CD4-positive, alpha-beta T cell (primary cell): ENCODE measurements at regions of chr16 and their contacts with region 1.

Region 1: GRCh38 chr16:50326949-50327402 is 41.8 kb downstream of the BRD7 start:
- DNase-seq: peak; percentile 39 to 93 (median 62)
- ATAC-seq: peak; percentile 92
- H3K4me3 ChIP-seq: no peak overlapping the region
- H3K4me3 Mint-ChIP-seq: no peak overlapping the region
- H3K27ac ChIP-seq: peak overlapping the region in 1 of 2 donors; percentile 20
- H3K27ac Mint-ChIP-seq: peak overlapping the region; percentile 84
- H3K4me1 ChIP-seq: peaks cover 38% of the 10 kb centered on the region
- H3K4me1 Mint-ChIP-seq: peaks cover 64% of the 10 kb centered on the region
- H3K27me3 ChIP-seq: no peaks in the 10 kb centered on the region
- H3K27me3 Mint-ChIP-seq: no peaks in the 10 kb centered on the region
- CTCF ChIP-seq: peak; percentile 83

Region 2: DNA sequence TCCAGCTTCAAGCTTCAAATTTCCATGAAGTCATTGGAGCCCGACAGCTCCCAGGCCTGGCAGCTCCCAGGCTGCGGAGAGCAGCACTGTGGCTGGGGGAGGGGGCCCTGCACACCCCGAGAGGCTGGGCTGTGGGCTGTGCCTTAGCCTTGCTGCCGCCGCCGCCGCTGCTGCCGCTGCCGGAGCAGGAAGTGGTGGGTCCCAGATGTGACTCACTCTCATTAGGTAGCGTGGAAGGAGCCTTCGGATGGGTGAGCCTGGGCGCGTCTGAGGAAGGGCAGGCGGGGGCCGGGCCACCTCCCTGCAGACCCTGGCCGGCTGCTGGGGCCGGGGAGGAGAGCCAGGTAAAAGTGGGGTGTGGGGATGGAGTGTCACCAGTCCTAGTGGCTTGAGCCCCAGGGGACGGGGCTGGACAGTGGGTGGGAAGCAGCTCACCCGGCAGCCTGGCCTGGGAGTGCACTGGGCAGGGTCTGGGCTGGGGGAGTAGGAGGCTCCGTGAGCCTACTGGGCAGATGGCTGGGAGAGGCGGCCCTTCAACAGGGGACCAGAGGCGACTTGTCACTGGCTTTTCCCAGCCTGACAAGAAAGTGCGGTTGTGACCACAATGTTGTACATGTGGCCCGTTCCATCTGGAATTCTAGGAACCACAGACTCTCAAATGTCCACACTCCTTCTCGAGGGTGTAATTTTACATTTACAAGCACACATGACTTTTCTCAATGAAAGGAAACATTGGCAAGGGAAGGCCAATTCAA is 60.5 kb before region 1 on chr16 and contains the start of gene ADCY7:
- CTCF ChIA-PET with region 1: interaction called, 7 read pairs
- POLR2A ChIA-PET with region 1: interaction called, 20 read pairs
- intact Hi-C with region 1: no loop called
- DNase-seq: peak; percentile 66 to 90 (median 86)
- ATAC-seq: peak; percentile 91
- H3K4me3 ChIP-seq: peak within 1 kb of the TSS; percentile 98
- H3K4me3 Mint-ChIP-seq: peak within 1 kb of the TSS; percentile 99
- H3K27ac ChIP-seq: peak within 1 kb of the TSS; percentile 87 to 97
- H3K27ac Mint-ChIP-seq: peak within 1 kb of the TSS; percentile 100
- H3K4me1 ChIP-seq: peaks cover 65% of the 10 kb centered on the region
- H3K4me1 Mint-ChIP-seq: peaks cover 73% of the 10 kb centered on the region
- H3K27me3 ChIP-seq: no peaks in the 10 kb centered on the region
- H3K27me3 Mint-ChIP-seq: no peaks in the 10 kb centered on the region
- CTCF ChIP-seq: no peak
- total RNA-seq, gene ADCY7: 136 to 147 TPM

Region 3: DNA sequence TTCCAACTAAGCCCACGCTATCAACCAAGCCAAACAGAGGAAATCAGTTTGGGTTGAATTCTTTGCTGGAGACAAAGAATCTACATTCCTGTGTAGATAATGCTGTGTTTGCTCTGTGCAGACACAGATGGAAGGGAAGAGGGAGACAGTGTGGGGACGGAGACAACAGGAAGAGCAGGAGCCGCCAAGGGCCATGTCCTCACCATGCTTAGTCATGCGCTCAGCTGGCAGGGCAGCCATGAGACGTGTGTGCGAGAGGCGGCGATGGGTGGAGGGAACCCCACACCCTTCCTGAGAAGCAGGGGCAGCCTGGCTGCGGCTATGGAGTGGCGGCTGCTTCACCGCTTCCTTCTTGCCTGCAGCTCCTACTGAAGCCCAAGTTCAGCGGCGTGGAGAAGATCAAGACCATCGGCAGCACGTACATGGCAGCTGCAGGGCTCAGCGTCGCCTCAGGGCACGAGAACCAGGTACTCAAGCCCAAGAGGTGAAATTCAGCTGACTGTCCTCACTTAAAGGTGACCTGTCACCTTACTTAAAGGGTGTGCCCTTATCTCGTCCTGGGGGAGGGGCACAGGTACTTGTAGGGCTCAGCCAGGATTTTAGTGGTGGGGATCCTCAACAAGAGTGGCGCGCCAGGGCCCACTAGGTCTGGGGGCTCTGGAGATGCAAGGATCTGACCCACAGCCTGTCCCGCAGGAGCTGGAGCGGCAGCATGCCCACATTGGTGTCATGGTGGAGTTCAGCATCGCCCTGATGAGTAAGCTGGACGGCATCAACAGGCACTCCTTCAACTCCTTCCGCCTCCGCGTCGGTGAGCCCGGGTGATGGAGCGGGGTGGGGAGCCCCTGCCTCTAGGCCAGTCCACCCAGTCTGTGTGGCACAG is 13.1 kb before region 1 on chr16:
- CTCF ChIA-PET with region 1: interaction called, 21 read pairs
- POLR2A ChIA-PET with region 1: interaction called, 10 read pairs
- intact Hi-C with region 1: no loop called
- DNase-seq: peak in 13 of 14 experiments; percentile 22 to 80 (median 60)
- ATAC-seq: peak; percentile 82
- H3K4me3 ChIP-seq: no peak overlapping the region
- H3K4me3 Mint-ChIP-seq: peak overlapping the region; percentile 57
- H3K27ac ChIP-seq: peak overlapping the region; percentile 17 to 52
- H3K27ac Mint-ChIP-seq: peak overlapping the region; percentile 91
- H3K4me1 ChIP-seq: peaks cover 45% of the 10 kb centered on the region
- H3K4me1 Mint-ChIP-seq: peaks cover 33% of the 10 kb centered on the region
- H3K27me3 ChIP-seq: no peaks in the 10 kb centered on the region
- H3K27me3 Mint-ChIP-seq: no peaks in the 10 kb centered on the region
- CTCF ChIP-seq: no peak

Region 4: GRCh38 chr16:50360033-50360778 is 33.2 kb after region 1 on chr16:
- CTCF ChIA-PET with region 1: interaction called, 91 read pairs
- POLR2A ChIA-PET with region 1: interaction called, 90 read pairs
- intact Hi-C with region 1: loop called in 1 of 2 experiments (anchors 1 kb)
- DNase-seq: no peak
- ATAC-seq: no peak
- H3K4me3 ChIP-seq: no peak overlapping the region
- H3K4me3 Mint-ChIP-seq: no peak overlapping the region
- H3K27ac ChIP-seq: no peak overlapping the region
- H3K27ac Mint-ChIP-seq: peak overlapping the region; percentile 54
- H3K4me1 ChIP-seq: peaks cover 11% of the 10 kb centered on the region
- H3K4me1 Mint-ChIP-seq: peaks cover 81% of the 10 kb centered on the region
- H3K27me3 ChIP-seq: no peaks in the 10 kb centered on the region
- H3K27me3 Mint-ChIP-seq: no peaks in the 10 kb centered on the region
- CTCF ChIP-seq: no peak

Region 5: DNA sequence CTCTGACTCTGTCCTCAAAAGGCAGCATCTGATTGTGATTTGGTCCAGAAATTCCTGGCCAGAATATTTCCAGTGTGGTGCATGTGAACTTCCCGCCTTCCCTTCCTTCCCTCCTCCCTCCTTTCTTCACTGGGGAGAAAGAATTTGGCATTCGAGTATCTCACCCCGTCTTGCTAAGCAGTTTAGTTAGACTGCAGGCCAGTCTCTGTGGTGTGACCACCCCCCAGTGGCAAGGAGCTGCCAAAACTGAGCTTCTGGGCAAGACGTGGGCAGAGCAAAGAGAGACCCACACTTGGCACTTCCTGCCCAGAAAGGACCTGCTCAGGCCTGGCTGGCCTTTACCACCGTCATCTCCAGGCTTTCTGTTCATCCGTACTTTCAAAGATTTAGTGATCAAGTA is 317.8 kb after region 1 on chr16:
- CTCF ChIA-PET with region 1: interaction called, 3 read pairs
- POLR2A ChIA-PET with region 1: interaction called, 7 read pairs
- intact Hi-C with region 1: loop called in 1 of 2 experiments (anchors 1 kb)
- DNase-seq: peak in 12 of 14 experiments; percentile 15 to 69 (median 46)
- ATAC-seq: peak; percentile 81
- H3K4me3 ChIP-seq: no peak overlapping the region
- H3K4me3 Mint-ChIP-seq: no peak overlapping the region
- H3K27ac ChIP-seq: no peak overlapping the region
- H3K27ac Mint-ChIP-seq: no peak overlapping the region
- H3K4me1 ChIP-seq: peaks cover 4% of the 10 kb centered on the region
- H3K4me1 Mint-ChIP-seq: peaks cover 6% of the 10 kb centered on the region
- H3K27me3 ChIP-seq: no peaks in the 10 kb centered on the region
- H3K27me3 Mint-ChIP-seq: no peaks in the 10 kb centered on the region
- CTCF ChIP-seq: peak; percentile 50